Activated naive CD4-positive, alpha-beta T cell treated with anti-CD3 and anti-CD28 coated beads for 36 hours (primary cell): ENCODE measurements at regions of chr9 and their contacts with region 1.

Region 1: DNA sequence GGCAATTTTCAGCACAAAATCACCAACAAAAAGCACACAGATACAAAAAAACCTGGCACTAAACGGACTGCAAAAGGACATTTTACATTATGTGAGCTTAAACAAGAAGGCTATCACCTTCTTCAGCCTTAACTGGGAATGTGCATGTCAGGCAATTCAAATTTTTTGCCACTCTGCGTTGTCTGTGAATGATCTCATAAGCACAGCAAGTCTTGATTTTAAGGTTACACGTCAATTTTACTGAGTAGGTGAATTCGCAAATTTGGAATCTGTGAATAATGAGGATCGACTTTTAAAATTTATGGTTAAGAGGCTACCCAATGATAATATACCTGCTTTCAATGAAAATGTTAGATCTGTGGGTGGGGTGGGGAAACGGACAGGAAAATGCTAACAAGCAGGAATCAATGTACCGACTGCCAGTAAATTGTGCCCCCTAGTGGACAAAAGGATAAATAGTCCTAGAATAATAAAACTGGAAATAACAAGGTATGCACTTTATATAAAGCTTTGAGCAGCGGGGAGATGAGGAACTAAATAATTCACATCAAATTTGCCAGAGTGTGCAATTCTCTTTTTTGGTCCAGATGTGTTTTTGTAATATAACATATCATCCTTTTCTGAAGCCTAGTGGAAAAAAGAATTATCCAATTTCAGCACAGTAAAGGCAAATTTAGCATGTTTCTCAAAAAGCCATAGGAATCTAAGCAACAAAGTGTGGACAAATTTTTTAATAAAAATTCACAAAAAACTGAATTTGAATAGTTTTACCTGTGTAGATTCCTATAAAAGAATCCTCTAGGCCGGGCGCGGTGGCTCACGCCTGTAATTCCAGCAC is 20.5 kb downstream of the EQTN start:
- DNase-seq: peak; percentile 13
- H3K4me3 Mint-ChIP-seq: no peak overlapping the region
- H3K27ac Mint-ChIP-seq: no peak overlapping the region
- H3K4me1 Mint-ChIP-seq: peaks cover 1% of the 10 kb centered on the region
- H3K27me3 Mint-ChIP-seq: peaks cover 6% of the 10 kb centered on the region

Region 2: GRCh38 chr9:26744191-26744965 is 532.0 kb before region 1 on chr9:
- CTCF ChIA-PET with region 1: no interaction called
- intact Hi-C with region 1: loop called (anchors 1 kb)
- DNase-seq: no peak
- H3K4me3 Mint-ChIP-seq: no peak overlapping the region
- H3K27ac Mint-ChIP-seq: no peak overlapping the region
- H3K4me1 Mint-ChIP-seq: no peaks in the 10 kb centered on the region
- H3K27me3 Mint-ChIP-seq: peaks cover 9% of the 10 kb centered on the region

Region 3: DNA sequence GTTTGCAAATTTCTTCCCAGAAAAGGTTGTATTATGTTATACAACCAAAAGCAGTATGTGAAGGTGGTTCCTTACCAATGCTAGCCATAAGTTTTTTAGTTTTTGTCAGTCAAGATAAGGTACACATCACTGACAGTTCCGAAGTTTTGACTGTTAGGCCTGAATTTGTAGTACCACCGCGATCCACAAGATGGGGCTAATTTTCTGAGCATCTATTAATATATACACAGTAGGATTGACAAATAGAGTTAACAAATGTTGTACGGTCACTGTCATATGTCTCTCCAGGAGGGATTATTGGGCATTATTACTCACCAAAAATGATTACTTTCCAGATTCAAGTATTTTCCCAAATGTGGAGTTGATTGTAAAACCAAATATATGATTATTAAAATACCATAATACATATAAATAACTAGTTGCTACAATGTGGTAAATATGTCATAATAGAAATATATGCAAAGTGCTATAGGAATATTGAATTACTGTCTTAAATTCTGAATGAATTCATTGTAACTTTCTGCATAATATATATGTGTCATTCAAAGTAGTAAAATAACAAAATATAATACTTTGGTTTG is 242.5 kb before region 1 on chr9:
- CTCF ChIA-PET with region 1: interaction called, 12 read pairs
- intact Hi-C with region 1: loop called (anchors 1 kb)
- DNase-seq: peak; percentile 78
- H3K4me3 Mint-ChIP-seq: no peak overlapping the region
- H3K27ac Mint-ChIP-seq: no peak overlapping the region
- H3K4me1 Mint-ChIP-seq: no peaks in the 10 kb centered on the region
- H3K27me3 Mint-ChIP-seq: no peaks in the 10 kb centered on the region

Region 4: GRCh38 chr9:27247756-27248155 is 28.7 kb before region 1 on chr9:
- CTCF ChIA-PET with region 1: interaction called, 3 read pairs
- intact Hi-C with region 1: loop called (anchors 2 kb)
- DNase-seq: peak; percentile 20
- H3K4me3 Mint-ChIP-seq: no peak overlapping the region
- H3K27ac Mint-ChIP-seq: no peak overlapping the region
- H3K4me1 Mint-ChIP-seq: no peaks in the 10 kb centered on the region
- H3K27me3 Mint-ChIP-seq: peaks cover 11% of the 10 kb centered on the region

Region 5: GRCh38 chr9:27407986-27408385 is 131.6 kb after region 1 on chr9:
- CTCF ChIA-PET with region 1: no interaction called
- intact Hi-C with region 1: no loop called
- DNase-seq: no peak
- H3K4me3 Mint-ChIP-seq: no peak overlapping the region
- H3K27ac Mint-ChIP-seq: no peak overlapping the region
- H3K4me1 Mint-ChIP-seq: no peaks in the 10 kb centered on the region
- H3K27me3 Mint-ChIP-seq: no peaks in the 10 kb centered on the region

Region 6: DNA sequence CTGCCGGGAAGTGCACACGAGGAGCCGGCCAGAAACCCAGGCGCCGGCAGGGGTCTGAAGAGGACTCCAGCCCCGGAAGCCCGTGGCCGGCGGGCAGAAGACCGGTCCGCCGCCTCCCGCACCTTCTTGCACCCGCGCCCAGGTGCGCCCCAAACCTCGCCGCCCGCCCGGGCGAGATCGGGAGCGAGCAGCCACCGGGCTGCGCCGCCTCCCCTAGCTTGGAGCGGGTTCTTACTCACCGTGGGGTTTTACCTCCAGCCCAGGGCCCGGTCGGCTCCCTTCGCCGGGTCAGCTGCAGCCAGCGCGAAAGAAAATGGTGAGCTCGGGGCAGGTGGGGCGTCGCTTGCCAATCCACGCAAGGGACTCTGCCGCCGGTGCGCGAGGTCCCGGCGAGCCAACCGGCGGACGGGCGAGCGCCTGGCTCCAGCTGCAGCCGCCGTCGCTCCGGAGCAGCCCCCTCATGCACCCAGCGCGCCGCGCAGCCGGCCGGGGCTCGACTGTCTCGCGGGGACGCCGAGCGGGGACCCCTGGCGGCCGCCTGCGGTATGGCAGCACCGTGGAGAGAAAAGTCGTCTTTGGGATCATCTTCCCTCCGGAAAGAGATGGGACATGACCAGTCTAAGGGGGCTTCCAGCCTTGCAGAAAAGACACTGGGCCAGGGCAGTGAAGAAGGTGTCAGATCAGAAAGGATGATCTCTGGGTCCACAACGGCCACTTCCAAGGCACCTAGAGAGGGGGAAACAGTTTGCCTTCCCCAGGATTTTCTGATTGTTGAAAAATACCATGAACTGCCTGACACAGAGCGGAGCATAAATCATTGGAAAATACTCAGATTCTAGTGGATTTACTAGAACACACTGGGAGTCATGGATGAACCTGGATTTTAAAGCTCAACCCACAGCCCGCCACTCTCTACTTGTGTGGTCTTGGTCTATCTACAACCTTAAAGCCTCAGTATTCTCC is 253.2 kb after region 1 on chr9 and contains the start of gene MOB3B:
- CTCF ChIA-PET with region 1: interaction called, 3 read pairs
- intact Hi-C with region 1: loop called (anchors 5 kb)
- DNase-seq: peak; percentile 80
- H3K4me3 Mint-ChIP-seq: peak within 1 kb of the TSS; percentile 86
- H3K27ac Mint-ChIP-seq: peak within 1 kb of the TSS; percentile 86
- H3K4me1 Mint-ChIP-seq: peaks cover 10% of the 10 kb centered on the region
- H3K27me3 Mint-ChIP-seq: peaks cover 8% of the 10 kb centered on the region
- total RNA-seq, gene MOB3B: 3.0 to 3.2 TPM